Lower leg skin (tissue), 4 donors: ENCODE measurements at regions of chr9 and their contacts with region 1.

Region 1: GRCh38 chr9:14715102-14715501 is 7.4 kb downstream of the CER1 start:
- DNase-seq: no peak
- H3K4me3 ChIP-seq: no peak overlapping the region
- CTCF ChIP-seq: no peak
- POLR2A ChIP-seq: no peak

Region 2: GRCh38 chr9:13841746-13842462 is 873.2 kb before region 1 on chr9:
- intact Hi-C with region 1: loop called (anchors 5 kb)
- DNase-seq: no peak
- H3K4me3 ChIP-seq: no peak overlapping the region
- CTCF ChIP-seq: no peak
- POLR2A ChIP-seq: no peak

Region 3: DNA sequence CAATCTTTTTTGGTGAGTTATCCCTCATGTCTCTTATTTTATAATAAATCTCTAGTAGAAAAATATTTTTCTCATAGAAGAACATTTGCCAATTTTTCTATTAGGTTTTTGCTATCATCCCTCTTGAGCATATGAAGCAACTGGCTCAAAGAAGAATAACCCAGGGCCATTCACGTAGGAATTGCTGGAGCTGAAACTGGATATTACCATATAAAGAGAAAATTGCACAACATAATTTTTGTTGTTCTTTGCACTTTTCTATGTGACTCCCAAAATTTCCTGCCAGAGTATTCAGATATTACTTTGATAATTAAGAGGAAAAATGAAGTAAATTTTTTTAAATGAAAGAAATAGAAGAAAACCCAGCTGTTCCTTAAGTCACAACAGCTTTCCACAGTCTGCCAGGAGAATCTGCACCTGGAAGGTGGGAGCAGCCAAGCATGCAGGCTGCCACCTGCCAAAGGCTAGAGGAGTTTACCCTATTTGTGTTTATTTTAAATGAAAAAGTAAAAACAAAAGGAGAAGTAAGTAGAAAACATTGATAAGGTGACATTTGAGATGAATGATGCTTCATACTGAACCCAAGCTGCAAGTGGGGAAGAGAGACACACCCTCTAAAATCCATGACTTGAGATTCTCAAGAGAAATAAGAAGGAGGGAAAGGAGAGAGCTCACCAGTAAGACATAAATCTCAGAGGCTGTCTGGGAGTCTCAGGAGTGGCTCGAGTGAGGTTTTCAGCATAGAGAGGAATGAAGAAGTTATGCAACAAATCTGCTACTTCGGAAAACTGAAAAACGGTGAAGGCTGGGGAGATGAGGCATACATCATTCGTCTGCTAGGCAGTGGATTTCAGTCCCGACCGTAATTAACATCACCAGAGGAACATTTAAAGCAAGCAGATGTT is 226.7 kb after region 1 on chr9:
- intact Hi-C with region 1: no loop called
- DNase-seq: no peak
- H3K4me3 ChIP-seq: no peak overlapping the region
- CTCF ChIP-seq: no peak
- POLR2A ChIP-seq: no peak